HepG2 (cell line): ENCODE measurements at regions of chr16 and their contacts with region 1.

Region 1: GRCh38 chr16:74455619-74456289 is 34.5 kb upstream of the CLEC18B start:
- DNase-seq: peak; percentile 90
- ATAC-seq: peak; percentile 65
- H3K4me3 ChIP-seq: no peak overlapping the region
- H3K27ac ChIP-seq: peak overlapping the region; percentile 52
- H3K4me1 ChIP-seq: peaks cover 18% of the 10 kb centered on the region
- H3K27me3 ChIP-seq: no peaks in the 10 kb centered on the region
- CTCF ChIP-seq: no peak
- EP300 ChIP-seq: peak in 1 of 2 experiments; percentile 45; a peak in 1 of 4 replicates
- POLR2A ChIP-seq: no peak
- RAD21 ChIP-seq: no peak

Region 2: DNA sequence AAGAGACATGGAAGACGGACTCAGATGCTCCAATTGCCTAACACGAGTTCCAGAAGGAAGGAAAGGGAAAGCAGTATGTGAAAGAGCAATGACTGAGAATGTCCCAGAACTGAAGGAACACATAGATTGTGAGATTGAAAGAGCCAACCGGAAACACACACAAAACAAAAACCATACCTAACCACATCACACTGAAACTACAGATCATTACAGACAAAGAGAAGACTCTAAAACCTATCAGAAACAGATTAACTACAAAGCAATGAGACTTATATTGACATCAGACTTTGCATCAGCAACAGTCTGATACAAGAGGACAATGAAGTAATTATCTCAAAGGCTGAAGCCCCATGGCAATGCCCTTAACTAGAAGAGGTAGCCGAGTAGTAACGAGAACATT is 11.1 kb after region 1 on chr16:
- CTCF ChIA-PET with region 1: no interaction called
- POLR2A ChIA-PET with region 1: no interaction called
- in situ Hi-C with region 1: no loop called
- intact Hi-C with region 1: loop called (anchors 1 kb)
- DNase-seq: no peak
- ATAC-seq: no peak
- H3K4me3 ChIP-seq: no peak overlapping the region
- H3K27ac ChIP-seq: no peak overlapping the region
- H3K4me1 ChIP-seq: no peaks in the 10 kb centered on the region
- H3K27me3 ChIP-seq: no peaks in the 10 kb centered on the region
- CTCF ChIP-seq: no peak
- EP300 ChIP-seq: no peak
- POLR2A ChIP-seq: no peak
- RAD21 ChIP-seq: no peak

Region 3: DNA sequence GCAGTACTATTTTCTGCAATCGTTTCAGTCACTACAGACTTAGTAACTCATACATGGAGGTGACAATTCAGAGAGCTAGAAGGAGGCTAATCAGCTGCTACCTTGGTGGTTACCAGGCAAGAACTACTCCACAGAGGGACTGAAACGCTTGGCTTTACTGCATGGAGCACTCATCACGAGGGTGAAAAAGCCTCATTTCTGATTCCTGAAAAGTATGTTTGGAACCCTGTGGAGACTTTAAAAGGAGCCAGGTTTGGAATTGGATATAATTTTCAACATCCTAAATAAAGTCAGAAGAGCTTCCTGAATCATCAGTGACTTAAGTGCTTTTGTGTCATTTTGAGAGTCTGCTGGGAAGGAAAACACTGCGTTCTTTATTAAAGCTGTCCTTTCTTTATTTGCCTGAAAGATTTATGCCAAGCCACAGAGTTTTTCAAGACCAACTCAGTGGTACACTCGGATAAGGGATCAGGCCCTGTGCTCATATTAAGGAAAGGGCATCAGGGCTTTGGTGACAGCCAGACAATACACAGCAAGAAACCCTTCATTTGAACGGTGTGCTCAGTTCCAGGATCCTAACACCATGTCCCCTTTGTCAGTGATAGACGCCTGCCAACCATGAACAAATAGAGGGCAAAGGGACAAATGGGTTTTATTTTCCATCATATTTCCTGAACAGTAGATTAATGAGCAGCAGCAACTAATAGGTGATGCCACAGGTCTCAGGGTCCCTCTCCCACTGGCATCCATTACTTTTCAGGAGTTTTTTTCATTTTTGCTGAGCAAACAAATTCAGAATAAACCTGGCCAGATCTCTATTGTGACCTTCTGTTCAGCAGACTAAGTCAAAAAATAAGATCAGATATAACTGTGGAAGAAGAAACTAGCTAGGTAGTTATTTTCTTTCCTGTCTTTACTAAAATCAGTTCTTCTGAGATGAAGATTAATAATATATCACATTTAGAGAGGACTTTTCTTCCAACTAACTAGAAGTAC is 46.0 kb after region 1 on chr16:
- CTCF ChIA-PET with region 1: no interaction called
- POLR2A ChIA-PET with region 1: no interaction called
- in situ Hi-C with region 1: no loop called
- intact Hi-C with region 1: no loop called
- DNase-seq: no peak
- ATAC-seq: no peak
- H3K4me3 ChIP-seq: no peak overlapping the region
- H3K27ac ChIP-seq: no peak overlapping the region
- H3K4me1 ChIP-seq: no peaks in the 10 kb centered on the region
- H3K27me3 ChIP-seq: no peaks in the 10 kb centered on the region
- CTCF ChIP-seq: no peak
- EP300 ChIP-seq: no peak
- POLR2A ChIP-seq: no peak
- RAD21 ChIP-seq: no peak

Region 4: DNA sequence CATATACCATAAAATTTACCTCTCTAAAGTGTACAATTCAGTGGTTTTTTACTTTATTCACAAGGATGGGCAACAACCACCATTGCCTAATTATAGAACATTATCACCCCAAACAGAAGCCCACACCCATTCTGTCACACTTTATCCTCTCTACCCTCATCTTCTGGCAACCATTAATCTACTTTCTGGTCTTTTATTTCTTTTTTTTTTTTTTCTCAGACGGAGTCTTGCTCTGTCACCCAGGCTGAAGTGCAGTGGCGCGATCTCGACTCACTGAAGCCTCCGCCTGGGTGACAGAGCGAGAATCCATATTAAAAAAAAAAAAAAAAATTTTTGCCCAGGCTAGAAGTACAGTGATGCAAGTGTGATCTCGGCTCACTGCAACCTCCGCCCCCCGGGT is 56.2 kb after region 1 on chr16:
- CTCF ChIA-PET with region 1: no interaction called
- POLR2A ChIA-PET with region 1: no interaction called
- in situ Hi-C with region 1: no loop called
- intact Hi-C with region 1: no loop called
- DNase-seq: no peak
- ATAC-seq: no peak
- H3K4me3 ChIP-seq: no peak overlapping the region
- H3K27ac ChIP-seq: no peak overlapping the region
- H3K4me1 ChIP-seq: no peaks in the 10 kb centered on the region
- H3K27me3 ChIP-seq: no peaks in the 10 kb centered on the region
- CTCF ChIP-seq: no peak
- EP300 ChIP-seq: no peak
- POLR2A ChIP-seq: no peak
- RAD21 ChIP-seq: no peak